ENCODE measurements at regions of chr12 and their contacts with region 1.

Region 1: DNA sequence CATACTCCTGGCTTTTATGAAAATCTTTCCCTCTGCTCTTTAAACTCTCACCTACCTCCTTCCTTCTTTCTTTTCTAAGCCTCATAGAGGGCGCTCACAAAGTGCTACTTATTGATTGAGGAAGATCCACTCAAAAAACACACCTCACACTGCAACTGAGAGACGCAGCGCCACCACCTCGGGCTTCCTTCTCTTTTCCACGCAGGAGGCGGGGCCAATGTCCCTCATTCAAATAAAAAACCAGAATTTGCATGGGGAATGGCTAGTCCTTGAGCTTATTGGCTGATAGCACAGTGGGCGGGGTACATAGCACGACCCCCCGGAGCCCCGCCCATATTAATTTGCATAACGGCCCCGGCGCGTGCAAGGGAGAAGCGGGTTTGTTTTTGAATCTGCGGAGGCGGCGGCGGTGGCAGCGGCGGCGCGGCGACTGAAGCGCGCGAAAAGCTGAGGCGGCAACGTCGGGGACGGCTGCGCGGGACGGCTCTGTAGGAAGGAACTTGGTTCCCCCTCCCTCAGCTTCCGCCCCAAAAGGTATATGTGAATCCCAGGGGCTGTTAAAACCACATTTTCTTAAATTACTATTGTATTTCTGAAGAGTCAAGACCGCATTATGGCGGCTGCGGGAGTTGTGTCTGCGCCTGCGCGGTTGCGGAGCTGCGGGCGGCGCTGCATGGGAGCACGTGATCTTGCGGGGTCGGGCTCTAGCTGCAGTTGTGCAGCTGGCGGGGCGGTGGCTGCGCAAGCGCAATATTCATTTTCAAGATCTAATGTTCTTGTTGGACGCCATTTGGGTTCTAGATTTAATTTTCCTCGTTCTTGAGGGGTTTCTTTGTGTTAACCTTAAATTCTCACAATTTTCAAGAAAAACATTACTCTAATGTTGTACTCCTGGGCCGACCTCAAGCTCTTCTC is at the start of gene ATF7IP:
- DNase-seq: peak; percentile 87
- CTCF ChIP-seq: peak; percentile 10

Region 2: DNA sequence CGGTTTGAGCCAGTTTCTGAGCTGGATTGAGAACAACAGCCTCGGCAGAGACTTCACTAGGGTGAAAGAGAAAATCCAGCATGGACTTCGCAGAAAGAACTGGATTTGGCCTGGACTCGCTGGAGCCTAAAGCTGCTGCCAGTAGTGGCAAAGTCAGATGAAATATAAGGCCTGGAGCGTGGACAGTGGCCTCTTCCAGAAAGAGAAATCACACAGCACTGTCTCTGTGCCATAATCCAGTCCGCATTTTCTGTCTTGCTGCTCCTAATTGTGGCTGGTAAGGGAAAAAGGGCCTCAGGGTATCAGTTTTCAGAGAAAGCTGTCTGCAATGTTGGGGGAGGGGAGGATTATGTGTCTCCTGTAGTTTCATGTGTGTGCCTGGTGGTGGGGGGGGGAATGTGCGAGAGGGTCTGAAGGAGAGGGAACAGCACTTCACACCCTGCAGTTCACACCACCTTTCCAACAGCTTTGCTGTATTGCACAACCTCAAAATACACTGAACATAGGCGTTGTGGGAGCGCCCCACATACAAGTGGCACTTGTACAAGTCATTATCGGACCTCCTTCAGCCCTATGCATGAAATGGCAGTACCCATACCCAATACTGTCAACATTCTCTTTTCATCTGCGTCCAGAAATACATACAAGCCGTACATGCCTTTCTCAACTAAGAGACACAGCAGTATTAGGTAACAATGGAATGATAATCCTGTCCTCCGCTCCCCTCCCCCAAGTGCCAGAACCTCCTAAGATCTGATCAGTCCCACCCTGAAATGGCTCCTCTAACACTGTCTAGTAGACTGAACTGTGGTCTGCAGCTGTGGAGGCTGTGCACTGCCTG is 107.6 kb before region 1 on chr12:
- in situ Hi-C with region 1: loop called (anchors 10 kb)
- DNase-seq: peak; percentile 38
- CTCF ChIP-seq: no peak

Region 3: DNA sequence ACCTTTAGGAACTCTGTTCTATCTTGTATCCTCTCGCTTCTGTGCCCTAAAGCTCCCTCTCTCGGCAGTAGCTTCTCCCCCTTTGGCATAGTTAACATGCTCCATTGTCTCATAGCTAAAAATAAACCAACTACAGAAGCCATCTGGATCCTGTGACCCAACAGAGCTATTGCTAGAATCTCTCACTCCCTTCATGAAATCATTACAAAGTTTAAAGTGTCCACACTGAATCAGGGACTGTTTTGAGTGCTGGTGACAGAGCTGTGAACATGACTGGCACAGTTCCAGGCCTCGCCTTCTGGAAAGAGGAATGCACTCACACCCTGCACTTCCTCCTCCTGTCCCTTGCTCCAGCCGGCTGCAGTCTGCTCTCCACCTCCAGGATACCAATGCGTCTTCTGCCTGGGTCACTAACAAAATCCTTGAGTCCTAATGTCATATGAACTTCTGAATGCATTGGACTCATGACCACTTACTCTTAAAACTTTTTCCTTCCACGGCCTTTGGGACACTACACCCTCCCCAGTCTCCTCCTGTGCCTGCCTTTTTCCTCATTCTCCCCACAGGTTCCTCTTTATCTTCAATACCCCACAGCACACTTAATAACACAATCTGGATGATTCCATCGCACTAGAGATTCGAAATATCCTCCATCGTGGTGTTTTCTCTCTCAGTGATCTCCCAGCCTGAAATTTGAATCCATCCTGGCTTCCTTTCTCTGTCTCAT is 188.9 kb after region 1 on chr12:
- in situ Hi-C with region 1: no loop called
- DNase-seq: no peak
- CTCF ChIP-seq: no peak

Region 4: DNA sequence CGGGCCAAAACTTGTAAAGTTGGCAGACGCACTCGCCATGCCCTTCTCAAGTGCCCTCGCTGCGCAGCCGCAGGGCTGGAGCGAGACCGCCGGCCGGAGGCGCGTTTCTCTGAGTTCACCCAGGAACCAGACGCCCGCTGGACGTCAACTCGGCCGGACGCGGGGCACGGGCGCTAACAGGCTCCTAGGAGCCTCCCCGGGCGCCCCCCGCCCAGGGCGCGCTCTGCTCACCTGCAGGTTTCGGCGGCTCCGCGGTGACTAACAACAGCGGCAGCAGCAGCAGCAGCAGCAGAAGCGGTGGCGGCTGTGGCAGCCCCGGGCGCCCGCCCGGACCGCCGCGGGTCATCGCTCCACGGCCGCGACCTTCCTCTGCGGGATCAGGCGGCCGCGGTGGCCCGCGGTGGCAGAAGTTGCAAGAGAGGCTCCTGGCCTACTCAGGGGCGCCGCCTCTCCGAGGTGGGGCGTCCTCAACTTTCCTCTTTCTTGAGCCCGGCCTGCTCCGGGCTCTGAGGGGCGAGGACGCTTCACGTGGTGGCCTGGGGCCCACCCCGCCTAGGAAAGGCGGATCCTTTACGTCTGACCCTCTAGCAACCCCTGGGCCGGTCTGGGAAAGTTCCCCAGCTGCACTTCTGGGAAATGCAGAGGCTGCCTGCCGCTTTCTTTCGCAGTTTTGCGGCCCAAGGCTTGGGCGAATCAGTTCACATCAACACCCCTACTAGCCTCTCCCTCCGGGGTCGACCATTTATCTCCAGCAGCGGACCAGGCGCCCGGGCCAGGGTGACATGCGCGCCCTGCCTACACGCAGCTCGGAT is 202.0 kb after region 1 on chr12 and contains the start of gene PLBD1:
- in situ Hi-C with region 1: no loop called
- DNase-seq: peak; percentile 64
- CTCF ChIP-seq: no peak

Region 5: DNA sequence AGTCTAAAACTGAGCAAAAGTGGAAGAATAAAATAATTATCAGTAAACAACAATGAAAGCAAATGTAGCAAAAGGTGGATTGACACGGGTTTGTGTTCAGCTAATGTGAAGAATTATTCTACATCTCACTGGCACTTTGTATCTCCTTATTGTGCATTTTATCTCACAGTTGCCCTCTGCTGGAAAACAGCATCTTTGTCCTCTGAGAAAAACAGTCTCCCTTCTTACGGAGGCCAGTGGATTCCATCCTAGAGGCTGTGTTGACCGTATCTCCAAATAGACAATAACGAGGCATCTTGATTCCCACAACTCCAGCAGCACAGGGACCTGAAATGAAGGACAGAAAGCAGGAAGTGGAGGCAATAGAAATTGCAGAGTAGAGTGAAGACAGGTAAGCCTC is 253.4 kb after region 1 on chr12:
- in situ Hi-C with region 1: loop called (anchors 10 kb)
- DNase-seq: no peak
- CTCF ChIP-seq: no peak